Sciatic nerve (tissue), 2 donors: ENCODE measurements at regions of chr7 and their contacts with region 1.

Region 1: DNA sequence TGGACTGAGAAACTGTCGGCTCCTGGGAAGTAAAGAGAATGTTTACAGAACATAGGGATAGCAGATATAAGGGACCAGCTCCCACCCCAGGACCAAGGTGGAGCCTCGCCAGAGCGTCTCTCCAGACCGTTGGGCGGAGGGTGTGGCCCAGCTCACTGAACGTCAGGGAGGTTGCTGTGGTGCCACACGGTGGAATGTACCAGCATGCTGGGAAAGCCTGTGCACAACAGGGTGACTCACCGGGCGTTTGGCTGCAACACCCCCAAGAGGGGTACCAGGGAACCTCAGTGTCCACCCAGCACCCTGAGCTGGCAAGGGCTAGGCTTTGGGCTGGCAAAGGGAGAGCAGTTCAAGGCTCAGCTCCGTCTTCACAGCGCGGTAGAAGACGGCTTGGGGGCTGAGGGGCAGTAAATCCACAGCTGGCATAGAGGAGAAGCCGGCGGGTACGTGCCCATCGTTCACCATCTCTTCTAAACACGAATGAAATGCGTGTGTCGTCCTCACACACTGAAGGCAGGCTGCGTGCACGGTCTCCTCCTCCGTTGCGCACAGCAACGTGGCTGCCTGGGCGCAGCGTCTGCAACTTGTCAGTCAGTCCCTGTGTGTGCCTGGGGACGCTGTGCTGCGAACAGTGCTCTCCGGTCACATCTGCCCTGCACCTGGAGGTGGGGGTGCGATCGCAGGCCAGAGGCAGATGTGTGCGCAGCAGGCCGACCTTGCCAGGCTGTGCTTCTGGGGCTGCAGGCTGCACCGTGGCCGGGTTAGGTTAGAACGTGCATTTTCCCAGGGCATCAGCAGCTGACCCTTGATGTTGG is 8.5 kb upstream of the GET4 start:
- DNase-seq: no peak
- ATAC-seq: peak; percentile 42

Region 2: DNA sequence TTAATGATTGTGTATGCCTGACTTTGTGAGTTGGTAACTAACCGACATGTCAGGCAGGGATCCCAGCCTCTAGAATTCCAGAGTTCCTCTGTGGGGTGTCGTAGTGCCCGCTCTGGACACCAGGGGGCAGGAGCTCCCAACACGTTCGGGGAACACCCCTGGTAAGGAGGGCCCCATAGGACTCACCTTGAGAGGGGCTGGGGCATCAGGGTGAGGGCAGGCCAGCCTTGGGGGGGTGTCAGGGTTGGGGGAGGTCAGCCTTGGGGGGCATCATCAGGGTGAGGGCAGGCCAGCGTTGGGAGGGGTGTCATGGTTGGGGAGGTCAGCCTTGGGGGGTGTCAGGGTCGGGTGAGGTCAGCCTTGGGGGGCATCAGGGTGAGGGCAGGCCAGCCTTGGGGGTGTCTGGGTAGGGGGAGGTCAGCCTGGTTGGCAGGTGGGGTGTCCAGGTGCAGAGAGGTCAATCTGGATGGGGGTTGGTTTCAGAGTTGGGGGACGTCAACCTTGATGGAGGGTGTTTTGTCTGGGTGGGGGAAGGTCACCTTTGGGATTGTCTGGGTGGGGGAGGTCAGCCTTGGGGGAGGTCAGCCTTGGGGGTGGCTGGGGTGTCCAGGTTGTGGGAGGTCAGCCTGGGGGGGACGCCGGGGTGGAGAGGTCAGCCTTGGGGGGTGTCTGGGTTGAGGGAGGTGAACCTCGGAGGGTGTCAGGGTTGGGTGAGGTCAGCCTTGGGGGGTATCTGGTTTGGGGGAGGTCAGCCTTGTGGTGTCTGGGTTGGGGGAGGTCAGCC is 81.2 kb before region 1 on chr7:
- intact Hi-C with region 1: loop called (anchors 10 kb)
- DNase-seq: peak; percentile 87
- ATAC-seq: peak; percentile 84

Region 3: DNA sequence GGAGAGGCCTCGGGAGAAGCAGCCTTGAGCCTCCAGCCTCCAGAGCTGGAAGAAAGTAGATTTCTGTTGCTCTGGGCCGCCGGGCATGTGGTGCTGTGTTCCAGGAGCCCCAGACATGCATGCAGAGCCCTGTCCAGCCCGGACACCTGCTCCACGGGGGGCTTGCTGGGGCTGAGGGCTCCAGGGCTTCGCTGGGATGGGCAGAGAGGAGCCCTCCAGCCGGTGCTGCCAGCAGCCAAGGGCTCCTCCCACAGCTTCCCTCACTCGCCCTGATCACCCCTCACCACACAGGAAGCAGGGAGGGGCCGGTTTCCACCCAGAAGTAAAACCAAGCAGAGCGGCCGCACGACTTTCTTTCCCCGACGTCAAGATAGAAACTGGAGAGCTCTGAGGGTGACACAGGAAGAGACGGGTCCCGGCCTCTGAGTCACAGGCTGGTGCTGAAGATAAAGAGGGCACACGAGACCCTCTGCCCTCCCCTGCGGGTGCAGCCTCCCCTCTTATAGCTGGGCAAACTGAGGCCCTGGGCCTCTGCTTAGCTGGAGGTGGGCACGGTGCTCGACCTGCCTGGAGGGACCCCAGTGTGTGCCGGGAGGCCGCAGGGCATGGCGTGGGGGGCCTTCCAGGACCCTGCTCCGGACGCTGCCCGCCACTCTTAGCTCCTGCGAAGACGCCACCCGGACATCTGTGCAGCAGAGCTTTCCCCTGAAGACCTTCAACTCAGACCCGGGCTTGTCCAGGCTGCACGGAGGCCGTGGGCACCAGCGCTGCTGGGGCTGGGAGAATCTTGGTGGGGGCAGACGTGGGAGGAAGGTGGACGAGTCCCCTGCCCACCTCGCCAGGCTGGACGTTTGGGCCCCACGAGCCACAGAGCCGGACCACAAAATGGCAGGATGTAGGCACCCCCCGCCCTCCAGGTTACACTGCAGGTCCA is 55.5 kb after region 1 on chr7:
- intact Hi-C with region 1: no loop called
- DNase-seq: peak; percentile 74
- ATAC-seq: peak; percentile 36